Left ventricle myocardium inferior (tissue), 1 donor: ENCODE measurements at regions of chr12 and their contacts with region 1.

Region 1: DNA sequence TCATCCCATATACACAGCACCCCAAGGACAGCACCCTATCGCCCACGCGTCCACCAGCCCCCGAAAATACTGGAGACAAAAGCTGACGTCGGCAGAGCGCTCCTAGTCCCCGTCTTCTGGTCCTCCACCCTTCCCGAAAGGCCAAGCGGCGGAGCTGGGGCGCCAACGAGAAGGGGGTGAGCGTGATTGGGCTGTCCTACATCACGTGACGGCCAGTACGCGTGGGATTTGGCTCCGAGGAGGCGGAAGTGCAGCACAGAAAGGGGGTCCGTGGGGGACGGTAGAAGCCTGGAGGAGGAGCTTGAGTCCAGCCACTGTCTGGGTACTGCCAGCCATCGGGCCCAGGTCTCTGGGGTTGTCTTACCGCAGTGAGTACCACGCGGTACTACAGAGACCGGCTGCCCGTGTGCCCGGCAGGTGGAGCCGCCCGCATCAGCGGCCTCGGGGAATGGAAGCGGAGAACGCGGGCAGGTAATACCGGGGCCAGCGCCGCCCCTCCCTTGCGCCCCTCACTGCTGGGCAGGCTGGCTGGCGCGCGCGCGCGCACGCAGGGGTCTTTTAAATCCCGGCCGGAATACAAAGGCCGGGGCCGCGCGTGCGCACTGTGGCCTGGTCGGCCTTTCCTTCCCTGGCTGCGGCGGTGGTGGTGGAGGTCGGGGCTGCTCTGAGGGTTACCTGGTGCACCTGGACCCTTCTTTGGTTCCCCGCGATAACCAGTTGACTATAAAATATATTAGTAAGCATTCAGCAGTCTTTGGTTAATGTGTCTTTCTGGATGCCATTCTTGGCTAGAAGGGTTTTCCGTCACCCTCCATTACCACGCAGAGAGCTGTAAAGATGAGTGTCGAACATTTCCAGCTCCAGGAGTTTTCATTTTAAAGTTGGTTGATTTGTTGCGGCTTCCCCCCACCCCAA is at the start of gene TDG:
- DNase-seq: peak; percentile 97
- H3K4me3 ChIP-seq: peak within 1 kb of the TSS; percentile 80
- H3K27ac ChIP-seq: peak within 1 kb of the TSS; percentile 95
- H3K4me1 ChIP-seq: peaks cover 74% of the 10 kb centered on the region
- H3K27me3 ChIP-seq: no peaks in the 10 kb centered on the region
- CTCF ChIP-seq: peak; percentile 17
- total RNA-seq, gene TDG: 11.3 TPM

Region 2: GRCh38 chr12:104064031-104064822 is 98.4 kb after region 1 on chr12 and contains the start of gene HCFC2:
- intact Hi-C with region 1: loop called (anchors 10 kb)
- DNase-seq: peak; percentile 92
- H3K4me3 ChIP-seq: peak within 1 kb of the TSS; percentile 94
- H3K27ac ChIP-seq: peak within 1 kb of the TSS; percentile 95
- H3K4me1 ChIP-seq: peaks cover 48% of the 10 kb centered on the region
- H3K27me3 ChIP-seq: no peaks in the 10 kb centered on the region
- CTCF ChIP-seq: no peak
- total RNA-seq, gene HCFC2: 9.2 TPM